ENCODE measurements at regions of chr12 and their contacts with region 1.

Region 1: DNA sequence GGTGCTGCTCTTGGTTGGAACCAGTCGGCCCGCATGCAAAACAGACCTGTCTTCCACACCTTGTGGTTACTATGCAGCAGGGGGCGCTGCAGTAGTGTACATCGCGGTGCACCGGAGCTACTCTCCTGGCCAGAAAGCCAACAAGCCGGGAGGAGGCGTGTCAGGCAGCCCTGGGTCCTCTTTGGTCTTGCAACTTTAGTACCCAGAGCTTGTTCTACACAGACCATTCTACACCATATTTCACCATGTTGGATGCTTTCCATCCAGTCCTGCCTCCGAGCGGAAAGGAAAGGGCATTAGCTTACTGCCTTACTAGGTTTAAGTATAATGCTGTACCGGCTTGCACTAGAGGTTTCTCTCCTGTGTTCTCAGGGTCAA is 927 bp upstream of the TMTC2 start:
- DNase-seq: peak; percentile 86
- ATAC-seq: peak; percentile 60
- H3K4me3 ChIP-seq: peak overlapping the region; percentile 82
- H3K27ac ChIP-seq: no peak overlapping the region
- H3K4me1 ChIP-seq: no peaks in the 10 kb centered on the region
- H3K27me3 ChIP-seq: no peaks in the 10 kb centered on the region
- CTCF ChIP-seq: peak; percentile 90
- POLR2A ChIP-seq: no peak
- RAD21 ChIP-seq: peak; percentile 82

Region 2: GRCh38 chr12:82672811-82673495 is 12.8 kb before region 1 on chr12:
- CTCF ChIA-PET with region 1: interaction called, 12 read pairs
- POLR2A ChIA-PET with region 1: no interaction called
- dilution Hi-C with region 1: no loop called
- in situ Hi-C with region 1: no loop called
- intact Hi-C with region 1: no loop called
- DNase-seq: no peak
- ATAC-seq: no peak
- H3K4me3 ChIP-seq: no peak overlapping the region
- H3K27ac ChIP-seq: no peak overlapping the region
- H3K4me1 ChIP-seq: no peaks in the 10 kb centered on the region
- H3K27me3 ChIP-seq: no peaks in the 10 kb centered on the region
- CTCF ChIP-seq: no peak
- POLR2A ChIP-seq: no peak
- RAD21 ChIP-seq: no peak

Region 3: DNA sequence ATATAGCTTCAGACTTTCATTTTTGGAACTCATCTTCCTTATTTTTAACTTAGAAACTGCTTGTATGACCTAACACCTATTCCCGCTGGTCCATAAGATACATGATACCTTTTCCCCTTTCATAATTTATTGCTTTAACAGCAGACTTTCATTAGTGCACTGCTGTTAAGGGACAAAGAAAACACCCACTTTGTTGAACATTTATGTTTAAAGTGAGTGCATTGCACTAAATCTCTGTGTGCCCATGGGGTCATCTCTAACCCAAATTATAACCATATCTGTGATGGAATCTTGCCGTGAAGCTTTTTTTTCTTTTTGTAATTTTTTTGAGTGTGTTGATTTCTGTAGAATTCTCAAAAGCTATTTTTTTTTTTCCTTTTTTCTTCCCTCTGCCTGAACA is 262.7 kb after region 1 on chr12:
- CTCF ChIA-PET with region 1: interaction called, 10 read pairs
- POLR2A ChIA-PET with region 1: no interaction called
- dilution Hi-C with region 1: no loop called
- in situ Hi-C with region 1: no loop called
- intact Hi-C with region 1: no loop called
- DNase-seq: no peak
- ATAC-seq: no peak
- H3K4me3 ChIP-seq: no peak overlapping the region
- H3K27ac ChIP-seq: no peak overlapping the region
- H3K4me1 ChIP-seq: no peaks in the 10 kb centered on the region
- H3K27me3 ChIP-seq: no peaks in the 10 kb centered on the region
- CTCF ChIP-seq: no peak
- POLR2A ChIP-seq: no peak
- RAD21 ChIP-seq: no peak

Region 4: GRCh38 chr12:83823431-83823963 is 1137.7 kb after region 1 on chr12:
- CTCF ChIA-PET with region 1: interaction called, 3 read pairs
- POLR2A ChIA-PET with region 1: no interaction called
- dilution Hi-C with region 1: no loop called
- in situ Hi-C with region 1: no loop called
- intact Hi-C with region 1: loop called (anchors 1 kb)
- DNase-seq: no peak
- ATAC-seq: no peak
- H3K4me3 ChIP-seq: no peak overlapping the region
- H3K27ac ChIP-seq: no peak overlapping the region
- H3K4me1 ChIP-seq: no peaks in the 10 kb centered on the region
- H3K27me3 ChIP-seq: no peaks in the 10 kb centered on the region
- CTCF ChIP-seq: no peak
- POLR2A ChIP-seq: no peak
- RAD21 ChIP-seq: no peak

Region 5: GRCh38 chr12:84397263-84397662 is 1711.5 kb after region 1 on chr12:
- CTCF ChIA-PET with region 1: interaction called, 3 read pairs
- POLR2A ChIA-PET with region 1: no interaction called
- dilution Hi-C with region 1: no loop called
- in situ Hi-C with region 1: no loop called
- intact Hi-C with region 1: loop called (anchors 2 kb)
- DNase-seq: no peak
- ATAC-seq: no peak
- H3K4me3 ChIP-seq: no peak overlapping the region
- H3K27ac ChIP-seq: no peak overlapping the region
- H3K4me1 ChIP-seq: no peaks in the 10 kb centered on the region
- H3K27me3 ChIP-seq: no peaks in the 10 kb centered on the region
- CTCF ChIP-seq: peak; percentile 38; the same call in 1 of the 2 replicates
- POLR2A ChIP-seq: no peak
- RAD21 ChIP-seq: no peak

Region 6: GRCh38 chr12:84502907-84503787 is 1817.4 kb after region 1 on chr12:
- CTCF ChIA-PET with region 1: interaction called, 8 read pairs
- POLR2A ChIA-PET with region 1: no interaction called
- dilution Hi-C with region 1: no loop called
- in situ Hi-C with region 1: loop called (anchors 5 kb)
- intact Hi-C with region 1: loop called (anchors 1 kb)
- DNase-seq: peak; percentile 72
- ATAC-seq: peak; percentile 99
- H3K4me3 ChIP-seq: no peak overlapping the region
- H3K27ac ChIP-seq: no peak overlapping the region
- H3K4me1 ChIP-seq: no peaks in the 10 kb centered on the region; the same call in 1 of the 2 replicates
- H3K27me3 ChIP-seq: no peaks in the 10 kb centered on the region
- CTCF ChIP-seq: peak; percentile 90
- POLR2A ChIP-seq: no peak
- RAD21 ChIP-seq: peak; percentile 90

Region 7: DNA sequence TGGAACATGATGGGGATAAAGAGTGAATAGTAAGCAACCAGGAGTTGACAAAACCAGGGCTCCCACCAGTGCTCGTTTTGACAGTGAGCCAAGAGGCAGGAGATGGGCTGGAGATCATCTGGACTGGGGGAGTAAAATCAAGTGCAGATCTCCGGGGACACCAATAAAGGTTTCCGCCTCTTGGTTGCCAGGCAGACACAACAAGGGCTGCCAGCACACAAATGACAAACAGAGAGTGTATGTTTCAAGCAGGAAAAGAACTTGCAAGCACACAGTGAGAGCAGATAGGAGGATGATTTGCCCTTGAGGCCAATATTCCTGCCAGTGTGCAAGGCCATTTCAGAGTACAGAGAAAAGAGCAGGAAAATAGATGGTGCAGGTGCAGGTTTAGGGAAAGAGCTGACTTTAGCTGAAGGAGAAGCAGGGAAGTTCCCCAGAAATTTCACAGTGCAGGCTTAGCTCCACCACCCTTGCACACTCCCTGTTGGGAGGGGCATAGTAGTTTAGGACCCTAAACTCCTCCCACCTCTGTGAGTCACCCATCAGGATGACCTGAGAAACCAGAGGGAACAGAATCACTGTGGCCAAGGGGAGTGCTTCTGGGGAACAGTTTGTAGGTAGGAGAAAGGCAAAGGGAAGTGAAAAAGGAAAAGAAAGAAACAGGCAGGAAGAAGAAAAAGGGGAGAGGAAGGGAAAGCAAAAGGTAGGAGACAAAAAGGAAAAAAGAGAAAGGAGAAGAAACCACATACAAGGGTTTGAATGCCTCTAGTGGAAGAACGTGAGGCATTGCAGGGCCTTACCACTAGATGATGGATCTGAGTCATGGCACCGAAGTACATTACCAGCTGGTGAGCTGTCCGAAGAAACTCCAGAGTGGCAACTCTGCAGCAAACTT is 1822.4 kb after region 1 on chr12:
- CTCF ChIA-PET with region 1: interaction called, 8 read pairs
- POLR2A ChIA-PET with region 1: no interaction called
- dilution Hi-C with region 1: no loop called
- in situ Hi-C with region 1: loop called (anchors 5 kb)
- intact Hi-C with region 1: loop called (anchors 1 kb)
- DNase-seq: peak; percentile 75
- ATAC-seq: peak; percentile 97
- H3K4me3 ChIP-seq: no peak overlapping the region
- H3K27ac ChIP-seq: no peak overlapping the region
- H3K4me1 ChIP-seq: peaks cover 2% of the 10 kb centered on the region; the same call in 1 of the 2 replicates
- H3K27me3 ChIP-seq: no peaks in the 10 kb centered on the region
- CTCF ChIP-seq: peak; percentile 45
- POLR2A ChIP-seq: no peak
- RAD21 ChIP-seq: peak; percentile 14; the same call in 1 of the 2 replicates